ENCODE measurements at regions of chr1 and their contacts with region 1.

Region 1: DNA sequence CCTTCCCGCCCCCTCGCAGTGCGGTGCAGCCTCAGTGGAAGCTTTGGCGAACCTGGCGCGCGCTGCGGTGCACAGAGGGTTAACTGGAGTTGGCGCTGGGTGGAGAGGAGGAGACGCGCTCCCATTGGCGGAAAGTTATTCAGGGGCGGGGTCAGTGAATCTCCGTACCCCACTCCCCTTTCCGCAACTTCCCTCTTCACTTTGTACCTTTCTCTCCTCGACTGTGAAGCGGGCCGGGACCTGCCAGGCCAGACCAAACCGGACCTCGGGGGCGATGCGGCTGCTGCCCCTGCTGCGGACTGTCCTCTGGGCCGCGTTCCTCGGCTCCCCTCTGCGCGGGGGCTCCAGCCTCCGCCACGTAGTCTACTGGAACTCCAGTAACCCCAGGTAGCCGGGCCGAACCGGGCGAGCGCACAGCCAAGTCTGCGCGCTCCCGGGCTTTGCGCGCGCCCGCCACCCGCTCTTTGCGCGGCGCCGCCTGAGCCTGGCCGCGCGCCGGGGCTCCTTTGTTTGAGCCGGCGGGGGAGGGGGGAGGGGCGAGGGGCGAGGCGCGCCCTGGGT is at the start of gene EFNA4:
- DNase-seq: peak; percentile 88
- H3K4me3 Mint-ChIP-seq: peak within 1 kb of the TSS; percentile 90
- H3K27ac Mint-ChIP-seq: peak within 1 kb of the TSS; percentile 37
- H3K4me1 Mint-ChIP-seq: peaks cover 37% of the 10 kb centered on the region
- H3K27me3 Mint-ChIP-seq: no peaks in the 10 kb centered on the region
- total RNA-seq, gene EFNA4: 6.6 to 8.5 TPM

Region 2: GRCh38 chr1:155044812-155045690 is 18.6 kb before region 1 on chr1:
- CTCF ChIA-PET with region 1: interaction called, 107 read pairs
- POLR2A ChIA-PET with region 1: interaction called, 5 read pairs
- DNase-seq: peak; percentile 73
- H3K4me3 Mint-ChIP-seq: no peak overlapping the region
- H3K27ac Mint-ChIP-seq: no peak overlapping the region
- H3K4me1 Mint-ChIP-seq: peaks cover 17% of the 10 kb centered on the region
- H3K27me3 Mint-ChIP-seq: peaks cover 3% of the 10 kb centered on the region

Region 3: GRCh38 chr1:155050560-155051341 is 12.9 kb before region 1 on chr1 and contains the start of gene ADAM15:
- CTCF ChIA-PET with region 1: interaction called, 107 read pairs
- POLR2A ChIA-PET with region 1: interaction called, 7 read pairs
- DNase-seq: peak; percentile 86
- H3K4me3 Mint-ChIP-seq: peak within 1 kb of the TSS; percentile 84
- H3K27ac Mint-ChIP-seq: peak within 1 kb of the TSS; percentile 80
- H3K4me1 Mint-ChIP-seq: peaks cover 30% of the 10 kb centered on the region
- H3K27me3 Mint-ChIP-seq: no peaks in the 10 kb centered on the region
- total RNA-seq, gene ADAM15: 73.9 to 76.4 TPM

Region 4: DNA sequence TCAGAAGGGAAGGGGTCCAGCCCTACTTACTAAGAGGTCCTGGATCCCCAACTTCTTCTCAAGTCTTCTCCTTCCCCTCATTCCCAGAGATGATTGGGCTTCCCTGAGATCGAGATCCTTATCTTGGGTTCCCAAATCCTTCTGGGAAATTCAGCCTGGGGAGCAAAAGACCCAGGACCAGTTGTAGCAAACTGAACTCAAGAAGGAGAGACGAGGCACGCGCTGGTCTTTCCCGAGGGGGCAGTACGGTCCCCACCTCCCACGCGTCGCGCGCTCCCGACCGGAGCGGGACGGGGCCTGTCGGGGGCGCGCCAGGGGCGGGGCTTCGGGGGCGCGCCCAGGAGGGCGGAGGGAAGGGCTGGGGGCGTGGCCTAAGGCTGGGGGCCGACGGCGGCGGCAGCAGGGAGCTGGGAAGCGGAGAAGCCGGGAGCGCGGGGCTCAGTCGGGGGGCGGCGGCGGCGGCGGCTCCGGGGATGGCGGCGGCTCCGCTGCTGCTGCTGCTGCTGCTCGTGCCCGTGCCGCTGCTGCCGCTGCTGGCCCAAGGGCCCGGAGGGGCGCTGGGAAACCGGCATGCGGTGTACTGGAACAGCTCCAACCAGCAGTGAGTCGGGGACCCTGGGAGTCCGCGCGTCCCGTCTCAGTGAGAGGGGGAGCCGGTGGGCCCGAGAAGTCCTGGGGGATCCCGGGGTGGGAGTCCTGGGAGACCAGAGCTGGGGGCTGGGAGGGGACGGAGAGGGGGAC is 15.0 kb after region 1 on chr1 and contains the start of gene EFNA3:
- CTCF ChIA-PET with region 1: interaction called, 121 read pairs
- POLR2A ChIA-PET with region 1: interaction called, 22 read pairs
- DNase-seq: peak; percentile 68
- H3K4me3 Mint-ChIP-seq: peak within 1 kb of the TSS; percentile 13
- H3K27ac Mint-ChIP-seq: no peak within 1 kb of the TSS
- H3K4me1 Mint-ChIP-seq: peaks cover 56% of the 10 kb centered on the region
- H3K27me3 Mint-ChIP-seq: peaks cover 54% of the 10 kb centered on the region
- total RNA-seq, gene EFNA3: 3.9 to 4.9 TPM

Measured in activated CD4-positive, alpha-beta memory T cell treated with anti-CD3 and anti-CD28 coated beads, Interleukin-2, amount 10 ng/mL, durations not matched to agents 7 days and 5 days (primary cell).